ENCODE measurements at regions of chr9 and their contacts with region 1.

Region 1: DNA sequence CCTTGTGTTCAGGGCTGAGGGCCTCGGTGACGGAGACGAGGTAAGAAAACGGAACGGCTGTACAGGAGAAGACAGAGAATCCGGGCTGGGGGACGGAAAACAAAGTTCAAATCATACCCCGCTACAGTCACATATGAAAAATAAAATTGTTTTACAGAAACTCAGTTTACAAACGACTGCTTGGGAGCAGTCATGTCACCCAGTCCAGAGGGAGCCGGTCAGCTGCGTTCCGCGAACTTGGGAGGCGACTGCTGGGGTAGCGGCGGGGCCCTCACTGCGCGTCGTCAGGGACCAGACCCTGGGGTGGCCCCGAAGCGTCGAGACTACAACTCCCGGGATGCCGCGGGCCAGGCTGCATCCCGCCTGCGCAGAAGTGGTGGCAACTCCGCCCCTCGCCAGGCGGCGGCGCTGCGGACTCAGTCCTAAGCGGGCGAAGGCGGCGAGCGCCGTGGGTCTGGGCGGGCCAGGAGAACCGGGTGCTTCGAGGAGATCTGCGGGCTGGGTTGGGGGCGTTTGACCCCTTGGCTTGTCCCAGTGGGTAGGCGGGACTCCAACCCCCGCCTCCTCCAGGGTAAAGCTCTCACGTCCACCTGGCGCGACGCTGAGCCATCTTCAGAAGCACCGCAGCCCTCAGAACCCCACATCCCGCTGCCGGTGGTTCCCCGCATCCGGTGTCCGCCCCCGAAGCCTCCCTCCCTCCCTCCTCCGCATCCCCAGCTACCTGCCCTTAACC is 4.0 kb downstream of the SIT1 start:
- DNase-seq: no peak
- H3K4me3 ChIP-seq: peak overlapping the region; percentile 74
- CTCF ChIP-seq: peak; percentile 99

Region 2: DNA sequence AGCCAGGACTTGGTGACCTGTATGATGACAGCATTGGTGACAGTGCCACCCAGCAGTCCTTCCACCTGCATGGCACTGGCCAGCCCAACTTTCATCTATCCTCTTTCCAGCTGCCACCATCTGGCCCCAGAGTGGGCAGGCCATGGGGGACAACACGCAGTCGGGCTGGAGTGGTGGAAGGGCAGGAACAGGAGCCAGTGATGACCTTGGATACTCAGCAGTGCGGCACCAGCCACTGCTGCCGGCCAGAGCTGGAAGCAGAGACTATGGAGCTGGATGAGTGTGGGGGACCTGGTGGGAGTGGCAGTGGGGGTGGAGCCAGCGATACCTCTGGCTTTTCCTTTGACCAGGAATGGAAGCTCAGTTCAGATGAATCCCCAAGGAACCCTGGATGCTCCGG is 99.8 kb before region 1 on chr9:
- CTCF ChIA-PET with region 1: no interaction called
- POLR2A ChIA-PET with region 1: no interaction called
- DNase-seq: no peak
- H3K4me3 ChIP-seq: no peak overlapping the region
- CTCF ChIP-seq: no peak

Region 3: DNA sequence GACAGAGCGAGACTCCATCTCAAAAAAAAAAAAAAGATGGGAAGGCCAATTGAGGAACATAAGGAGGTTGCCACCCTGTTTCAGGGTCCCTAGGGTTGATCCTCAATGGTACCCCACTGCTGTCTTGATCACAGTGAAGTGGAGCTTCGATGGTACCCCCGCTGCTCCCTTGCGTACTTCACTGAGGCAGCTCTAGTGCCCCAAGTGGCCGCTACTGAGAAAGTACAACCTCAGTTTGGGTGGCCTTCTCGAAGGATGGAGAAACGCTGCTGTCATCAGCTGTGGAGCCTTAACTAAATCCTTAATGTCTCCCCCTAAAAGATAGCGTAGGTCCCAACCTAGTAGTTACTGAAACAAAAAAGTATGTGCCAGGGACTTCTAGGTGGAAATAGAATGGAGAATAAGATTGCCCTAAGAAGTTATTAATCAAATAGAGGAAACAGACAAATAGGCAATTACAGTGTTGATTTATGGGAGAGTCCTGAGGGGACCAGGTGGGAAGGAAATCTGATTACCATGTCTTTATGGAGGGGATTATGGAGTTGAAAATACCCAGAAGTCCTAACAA is 35.4 kb before region 1 on chr9:
- CTCF ChIA-PET with region 1: interaction called, 34 read pairs
- POLR2A ChIA-PET with region 1: interaction called, 3 read pairs
- DNase-seq: no peak
- H3K4me3 ChIP-seq: no peak overlapping the region
- CTCF ChIP-seq: peak; percentile 73

Region 4: DNA sequence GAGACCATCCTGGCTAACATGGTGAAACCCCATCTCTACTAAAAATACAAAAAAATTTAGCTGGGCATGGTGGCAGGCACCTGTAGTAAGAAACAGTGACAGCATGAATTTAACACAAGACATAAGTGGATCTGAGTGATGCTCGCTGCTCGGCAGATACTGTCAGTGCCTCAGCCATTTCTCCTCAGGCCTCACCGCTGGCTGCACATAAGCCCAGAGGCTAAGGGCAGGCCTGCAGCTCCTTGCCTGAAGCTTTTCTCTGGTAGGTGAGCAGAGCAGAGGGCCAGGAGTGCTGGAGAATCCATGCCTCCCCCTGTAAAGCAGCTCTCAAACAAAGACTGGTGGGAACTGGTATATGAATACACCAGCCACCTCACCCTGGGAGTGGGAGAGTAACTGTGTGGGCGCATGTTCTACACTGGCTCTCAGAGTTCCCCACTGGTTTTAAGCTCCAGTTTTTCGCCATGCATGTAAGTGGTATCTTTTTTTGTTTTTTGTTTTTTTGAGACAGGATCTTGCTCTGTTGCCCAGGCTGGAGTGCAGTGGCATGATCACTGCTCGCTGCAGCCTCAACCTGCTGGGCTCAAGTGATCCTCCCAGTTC is 18.2 kb before region 1 on chr9:
- CTCF ChIA-PET with region 1: interaction called, 19 read pairs
- POLR2A ChIA-PET with region 1: no interaction called
- DNase-seq: no peak
- H3K4me3 ChIP-seq: no peak overlapping the region
- CTCF ChIP-seq: no peak

Region 5: DNA sequence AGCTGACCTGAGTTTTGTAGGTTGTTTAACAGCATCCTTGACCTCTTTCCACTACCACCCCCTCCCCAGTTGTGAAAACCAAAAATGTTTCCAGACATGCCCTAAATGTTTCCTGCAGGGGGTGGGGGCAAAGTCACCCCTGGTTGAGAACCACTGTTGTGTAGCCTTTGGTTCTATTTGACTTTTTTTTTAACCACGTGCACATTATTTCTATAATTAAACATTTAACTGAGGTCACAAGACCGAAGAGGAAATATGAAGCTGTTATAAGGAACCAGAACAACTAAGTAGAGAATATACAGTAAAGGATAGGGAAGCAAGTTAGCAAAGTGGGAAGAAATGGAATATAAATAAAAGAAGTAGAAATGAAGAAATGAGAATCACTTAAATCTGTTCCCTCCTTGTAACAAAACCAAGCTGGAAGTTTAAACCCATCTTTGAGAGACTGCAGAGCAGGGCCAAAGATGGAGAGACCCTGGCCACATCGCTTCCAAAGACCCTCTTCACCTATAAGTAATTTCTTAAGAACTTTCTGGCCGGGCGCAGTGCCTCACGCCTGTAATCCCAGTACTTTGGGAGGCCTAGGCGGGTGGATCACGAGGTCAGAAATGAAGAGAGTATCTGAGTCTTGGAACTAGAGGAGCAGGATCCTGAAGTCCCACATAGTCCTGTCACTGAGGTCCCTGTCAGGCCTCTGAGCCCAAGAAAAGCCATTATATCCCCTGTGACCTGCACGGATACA is 10.4 kb before region 1 on chr9:
- CTCF ChIA-PET with region 1: interaction called, 19 read pairs
- POLR2A ChIA-PET with region 1: no interaction called
- DNase-seq: no peak
- H3K4me3 ChIP-seq: no peak overlapping the region
- CTCF ChIP-seq: no peak

Region 6: GRCh38 chr9:35711501-35712428 is 65.1 kb after region 1 on chr9:
- CTCF ChIA-PET with region 1: no interaction called
- POLR2A ChIA-PET with region 1: no interaction called
- DNase-seq: no peak
- H3K4me3 ChIP-seq: no peak overlapping the region
- CTCF ChIP-seq: no peak